ENCODE measurements at regions of chr17 and their contacts with region 1.

Region 1: DNA sequence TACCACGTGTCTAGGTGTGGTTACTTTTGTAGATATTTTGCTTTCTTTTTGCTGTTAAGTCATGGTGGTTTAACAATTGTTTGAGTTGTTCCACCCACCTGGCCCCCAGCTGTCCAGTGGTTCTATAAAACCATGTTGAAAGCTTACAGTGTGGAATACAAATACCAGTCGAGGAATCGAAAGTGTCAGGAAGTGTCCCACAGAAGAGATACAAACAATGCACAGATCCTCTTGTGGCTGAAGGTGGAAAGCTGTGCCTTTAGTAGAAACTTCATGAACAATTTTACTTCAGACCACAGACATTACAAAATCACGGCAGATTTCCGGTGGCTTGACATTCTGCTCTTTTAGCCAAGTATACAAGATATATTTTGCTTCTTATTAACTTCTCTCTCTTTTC is 782.4 kb upstream of the SOX9 start:
- DNase-seq: peak; percentile 58
- H3K4me3 Mint-ChIP-seq: peak overlapping the region; percentile 68
- H3K27ac Mint-ChIP-seq: peak overlapping the region; percentile 94
- H3K4me1 Mint-ChIP-seq: peaks cover 21% of the 10 kb centered on the region
- H3K27me3 Mint-ChIP-seq: no peaks in the 10 kb centered on the region
- CTCF ChIP-seq: no peak

Region 2: GRCh38 chr17:71118039-71118438 is 220.4 kb before region 1 on chr17:
- CTCF ChIA-PET with region 1: no interaction called
- POLR2A ChIA-PET with region 1: no interaction called
- intact Hi-C with region 1: loop called (anchors 10 kb)
- DNase-seq: peak; percentile 57
- H3K4me3 Mint-ChIP-seq: no peak overlapping the region
- H3K27ac Mint-ChIP-seq: peak overlapping the region; percentile 5
- H3K4me1 Mint-ChIP-seq: peaks cover 9% of the 10 kb centered on the region
- H3K27me3 Mint-ChIP-seq: no peaks in the 10 kb centered on the region
- CTCF ChIP-seq: peak; percentile 49

Region 3: GRCh38 chr17:71251951-71252350 is 86.4 kb before region 1 on chr17:
- CTCF ChIA-PET with region 1: no interaction called
- POLR2A ChIA-PET with region 1: no interaction called
- intact Hi-C with region 1: no loop called
- DNase-seq: no peak
- H3K4me3 Mint-ChIP-seq: no peak overlapping the region
- H3K27ac Mint-ChIP-seq: no peak overlapping the region
- H3K4me1 Mint-ChIP-seq: no peaks in the 10 kb centered on the region
- H3K27me3 Mint-ChIP-seq: no peaks in the 10 kb centered on the region
- CTCF ChIP-seq: no peak

Region 4: DNA sequence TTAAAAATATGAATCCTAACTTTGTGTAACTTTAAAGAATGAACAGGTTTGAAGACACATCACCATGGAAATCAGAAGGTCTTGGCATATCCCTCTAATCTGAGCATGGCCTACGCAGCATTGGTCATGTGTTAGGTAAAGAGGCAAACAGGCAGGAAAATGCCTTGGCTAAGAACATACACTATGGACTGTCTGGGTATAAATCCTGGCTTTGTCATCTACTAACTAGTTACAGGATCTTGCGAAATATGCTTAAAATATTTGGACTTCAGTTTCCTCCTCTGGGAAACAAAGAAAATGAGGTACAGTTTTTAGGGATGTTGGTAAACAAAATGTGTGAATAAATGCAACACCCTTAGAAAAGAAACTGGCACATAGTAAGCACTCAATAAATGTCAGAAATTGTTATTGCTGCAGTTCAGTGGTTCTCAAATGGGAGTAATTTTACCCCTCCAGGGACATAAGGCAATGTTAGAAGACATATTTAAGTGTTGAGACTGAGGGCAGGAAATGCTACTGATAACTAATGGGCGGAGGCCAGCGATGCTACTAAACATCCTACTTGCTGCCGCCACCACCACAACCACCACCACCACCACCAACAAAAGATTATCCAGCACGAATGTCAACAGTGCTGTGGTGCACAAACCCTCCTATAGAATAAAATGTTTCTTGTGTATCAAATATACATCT is 11.7 kb after region 1 on chr17:
- CTCF ChIA-PET with region 1: no interaction called
- POLR2A ChIA-PET with region 1: no interaction called
- intact Hi-C with region 1: no loop called
- DNase-seq: no peak
- H3K4me3 Mint-ChIP-seq: no peak overlapping the region
- H3K27ac Mint-ChIP-seq: no peak overlapping the region
- H3K4me1 Mint-ChIP-seq: no peaks in the 10 kb centered on the region
- H3K27me3 Mint-ChIP-seq: no peaks in the 10 kb centered on the region
- CTCF ChIP-seq: no peak

Region 5: GRCh38 chr17:71360301-71360700 is 21.9 kb after region 1 on chr17:
- CTCF ChIA-PET with region 1: no interaction called
- POLR2A ChIA-PET with region 1: no interaction called
- intact Hi-C with region 1: no loop called
- DNase-seq: no peak
- H3K4me3 Mint-ChIP-seq: no peak overlapping the region
- H3K27ac Mint-ChIP-seq: no peak overlapping the region
- H3K4me1 Mint-ChIP-seq: peaks cover 7% of the 10 kb centered on the region
- H3K27me3 Mint-ChIP-seq: no peaks in the 10 kb centered on the region
- CTCF ChIP-seq: no peak